ENCODE measurements at regions of chr16 and their contacts with region 1.

Region 1: DNA sequence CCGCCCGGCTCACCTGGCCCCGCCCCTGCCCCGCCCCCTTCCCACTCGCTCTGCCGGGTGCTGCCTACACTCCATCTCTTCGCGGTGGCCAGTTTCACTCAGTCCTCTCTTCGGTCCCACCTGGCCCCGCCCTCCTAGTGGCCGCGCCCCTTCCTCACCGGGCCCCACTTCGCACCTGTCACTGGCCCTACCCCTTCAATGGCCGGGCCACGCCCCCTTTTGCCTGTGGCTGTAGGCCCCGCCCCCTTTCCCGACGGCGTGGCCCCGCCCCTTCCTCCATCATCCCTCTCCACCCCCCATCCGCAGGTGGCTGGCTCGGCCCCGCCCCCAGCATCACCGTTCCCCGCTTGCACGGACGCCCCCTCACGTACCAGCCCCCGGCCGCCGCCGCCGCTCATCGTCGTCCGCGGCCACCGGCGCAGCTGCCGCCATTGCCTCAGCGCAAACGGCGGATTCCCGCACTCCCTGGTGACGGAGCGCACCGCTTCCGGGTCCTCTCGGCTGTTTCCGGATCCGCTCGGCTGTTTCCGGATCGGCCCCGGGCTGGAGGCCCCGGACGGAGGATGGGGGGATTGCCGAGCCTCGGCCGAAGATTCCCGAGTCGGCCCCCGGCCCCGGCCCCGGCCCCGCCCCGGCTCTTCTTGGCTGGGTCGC is at the start of gene RABEP2:
- DNase-seq: peak; percentile 92 to 99 (median 94)
- H3K4me3 ChIP-seq: peak within 1 kb of the TSS; percentile 66 to 95
- H3K4me3 Mint-ChIP-seq: peak within 1 kb of the TSS; percentile 91 to 96 (median 94)
- H3K27ac ChIP-seq: peak within 1 kb of the TSS; percentile 93
- H3K27ac Mint-ChIP-seq: peak within 1 kb of the TSS; percentile 96 to 100 (median 99)
- H3K4me1 ChIP-seq: peaks cover 12% of the 10 kb centered on the region
- H3K4me1 Mint-ChIP-seq: peaks cover 9 to 27% (median 15%) of the 10 kb centered on the region in 4 donors
- H3K27me3 ChIP-seq: no peaks in the 10 kb centered on the region
- H3K27me3 Mint-ChIP-seq: no peaks in the 10 kb centered on the region
- total RNA-seq, gene RABEP2: 25.7 to 29.0 TPM

Region 2: GRCh38 chr16:28846080-28846932 is 78.6 kb before region 1 on chr16 and contains the start of gene TUFM:
- CTCF ChIA-PET with region 1: no interaction called
- POLR2A ChIA-PET with region 1: interaction called, 18 read pairs
- intact Hi-C with region 1: loop called (anchors 1 kb)
- DNase-seq: peak; percentile 98 to 99 (median 99)
- H3K4me3 ChIP-seq: peak within 1 kb of the TSS; percentile 86 to 93
- H3K4me3 Mint-ChIP-seq: peak within 1 kb of the TSS; percentile 92 to 100 (median 94)
- H3K27ac ChIP-seq: peak within 1 kb of the TSS; percentile 87
- H3K27ac Mint-ChIP-seq: peak within 1 kb of the TSS; percentile 95 to 99 (median 97)
- H3K4me1 ChIP-seq: peaks cover 22% of the 10 kb centered on the region
- H3K4me1 Mint-ChIP-seq: peaks cover 18 to 35% (median 25%) of the 10 kb centered on the region in 4 donors
- H3K27me3 ChIP-seq: no peaks in the 10 kb centered on the region
- H3K27me3 Mint-ChIP-seq: no peaks in the 10 kb centered on the region
- total RNA-seq, gene TUFM: 98.0 to 108 TPM

Region 3: GRCh38 chr16:28879841-28880588 is 44.8 kb before region 1 on chr16:
- CTCF ChIA-PET with region 1: no interaction called
- POLR2A ChIA-PET with region 1: interaction called, 4 read pairs
- intact Hi-C with region 1: loop called (anchors 2 kb)
- DNase-seq: peak; percentile 79 to 92 (median 82)
- H3K4me3 ChIP-seq: peak overlapping the region; percentile 49 to 82
- H3K4me3 Mint-ChIP-seq: peak overlapping the region; percentile 88 to 93 (median 90)
- H3K27ac ChIP-seq: peak overlapping the region; percentile 53
- H3K27ac Mint-ChIP-seq: peak overlapping the region in 2 of 7 donors; percentile 66 to 74
- H3K4me1 ChIP-seq: peaks cover 13% of the 10 kb centered on the region
- H3K4me1 Mint-ChIP-seq: peaks cover 3 to 18% (median 11%) of the 10 kb centered on the region in 4 donors
- H3K27me3 ChIP-seq: no peaks in the 10 kb centered on the region
- H3K27me3 Mint-ChIP-seq: peaks cover 0 to 7% of the 10 kb centered on the region in 2 donors

Region 4: DNA sequence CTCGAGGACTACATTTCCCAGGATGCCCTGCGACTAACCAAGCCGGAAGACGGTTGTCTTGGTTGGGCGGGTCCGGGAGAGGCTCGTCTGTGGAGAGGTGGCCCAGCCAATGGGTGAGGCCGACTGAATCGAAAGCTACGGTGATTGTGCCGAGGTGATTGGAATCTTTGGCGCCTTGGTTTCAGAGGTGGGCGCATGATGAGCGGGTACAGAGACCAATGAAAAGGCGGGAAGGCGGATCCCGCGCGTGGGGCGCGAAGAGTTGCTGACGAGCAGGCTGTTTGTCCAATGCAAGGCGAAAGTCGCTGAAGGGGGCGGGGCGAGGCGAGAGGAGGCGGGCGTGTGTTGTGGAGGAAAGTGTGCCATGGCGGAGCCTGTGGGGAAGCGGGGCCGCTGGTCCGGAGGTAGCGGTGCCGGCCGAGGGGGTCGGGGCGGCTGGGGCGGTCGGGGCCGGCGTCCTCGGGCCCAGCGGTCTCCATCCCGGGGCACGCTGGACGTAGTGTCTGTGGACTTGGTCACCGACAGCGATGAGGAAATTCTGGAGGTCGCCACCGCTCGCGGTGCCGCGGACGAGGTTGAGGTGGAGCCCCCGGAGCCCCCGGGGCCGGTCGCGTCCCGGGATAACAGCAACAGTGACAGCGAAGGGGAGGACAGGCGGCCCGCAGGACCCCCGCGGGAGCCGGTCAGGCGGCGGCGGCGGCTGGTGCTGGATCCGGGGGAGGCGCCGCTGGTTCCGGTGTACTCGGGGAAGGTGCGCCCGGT is 26.0 kb after region 1 on chr16 and contains the start of gene NFATC2IP:
- CTCF ChIA-PET with region 1: interaction called, 19 read pairs
- POLR2A ChIA-PET with region 1: interaction called, 19 read pairs
- intact Hi-C with region 1: loop called (anchors 1 kb)
- DNase-seq: peak; percentile 99 to 100 (median 100)
- H3K4me3 ChIP-seq: peak within 1 kb of the TSS; percentile 12 to 66
- H3K4me3 Mint-ChIP-seq: peak within 1 kb of the TSS; percentile 93 to 99 (median 96)
- H3K27ac ChIP-seq: peak within 1 kb of the TSS; percentile 70
- H3K27ac Mint-ChIP-seq: peak within 1 kb of the TSS; percentile 68 to 96 (median 93)
- H3K4me1 ChIP-seq: peaks cover 28% of the 10 kb centered on the region
- H3K4me1 Mint-ChIP-seq: peaks cover 14 to 40% (median 29%) of the 10 kb centered on the region in 4 donors
- H3K27me3 ChIP-seq: no peaks in the 10 kb centered on the region
- H3K27me3 Mint-ChIP-seq: no peaks in the 10 kb centered on the region
- total RNA-seq, gene NFATC2IP: 105 to 115 TPM

Region 5: DNA sequence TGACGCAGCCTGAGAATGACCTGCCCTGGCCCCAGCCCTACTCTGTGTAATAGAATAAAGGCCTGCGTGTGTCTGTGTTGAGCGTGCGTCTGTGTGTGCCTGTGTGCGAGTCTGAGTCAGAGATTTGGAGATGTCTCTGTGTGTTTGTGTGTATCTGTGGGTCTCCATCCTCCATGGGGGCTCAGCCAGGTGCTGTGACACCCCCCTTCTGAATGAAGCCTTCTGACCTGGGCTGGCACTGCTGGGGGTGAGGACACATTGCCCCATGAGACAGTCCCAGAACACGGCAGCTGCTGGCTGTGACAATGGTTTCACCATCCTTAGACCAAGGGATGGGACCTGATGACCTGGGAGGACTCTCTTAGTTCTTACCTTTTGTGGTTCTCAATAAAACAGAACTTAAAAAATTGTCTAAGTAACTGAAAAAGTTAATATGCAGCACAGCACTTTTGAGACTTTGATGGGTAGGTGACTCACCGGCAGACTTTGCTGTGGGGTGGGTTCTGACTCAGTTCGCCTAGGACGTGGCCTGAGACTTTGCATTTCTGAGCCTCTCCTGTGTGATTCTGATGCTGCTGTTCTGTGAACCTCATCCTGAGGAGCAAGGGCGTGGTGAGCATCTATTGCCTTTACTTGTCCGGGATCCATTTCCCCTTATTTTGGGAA is 65.6 kb after region 1 on chr16:
- CTCF ChIA-PET with region 1: no interaction called
- POLR2A ChIA-PET with region 1: interaction called, 10 read pairs
- intact Hi-C with region 1: no loop called
- DNase-seq: peak in 1 of 5 donors; percentile 73
- H3K4me3 ChIP-seq: no peak overlapping the region
- H3K4me3 Mint-ChIP-seq: peak overlapping the region; percentile 62 to 99 (median 80)
- H3K27ac ChIP-seq: peak overlapping the region; percentile 33
- H3K27ac Mint-ChIP-seq: peak overlapping the region; percentile 80 to 98 (median 93)
- H3K4me1 ChIP-seq: peaks cover 47% of the 10 kb centered on the region
- H3K4me1 Mint-ChIP-seq: peaks cover 33 to 58% (median 45%) of the 10 kb centered on the region in 4 donors
- H3K27me3 ChIP-seq: no peaks in the 10 kb centered on the region
- H3K27me3 Mint-ChIP-seq: no peaks in the 10 kb centered on the region

Measured in CD4-positive, alpha-beta memory T cell (primary cell).